ENCODE measurements at regions of chr1 and their contacts with region 1.

Region 1: DNA sequence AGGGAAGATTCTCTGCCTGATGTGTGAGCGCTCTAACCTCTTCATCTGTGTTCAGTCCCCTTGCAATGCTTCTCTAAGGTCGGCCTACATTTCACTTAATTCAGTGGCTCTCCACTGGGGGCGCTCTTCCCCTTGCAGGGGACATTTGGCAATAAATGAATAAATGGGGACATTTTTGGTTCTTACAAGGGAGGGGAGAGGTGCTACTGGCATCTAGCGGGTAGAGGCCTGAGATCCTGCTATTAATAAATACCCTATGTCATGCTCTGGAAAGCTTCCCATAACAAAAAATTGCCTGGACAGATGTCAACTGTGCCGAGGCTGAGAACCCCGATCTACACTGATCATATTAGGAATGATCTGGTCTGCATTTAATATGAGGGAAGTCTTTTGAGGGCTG is 25.9 kb upstream of the DNAJC11 start:
- DNase-seq: no peak
- H3K4me3 ChIP-seq: no peak overlapping the region
- H3K27ac ChIP-seq: no peak overlapping the region
- H3K4me1 ChIP-seq: peaks cover 0 to 6% (median 0%) of the 10 kb centered on the region in 3 donors
- H3K27me3 ChIP-seq: no peaks in the 10 kb centered on the region
- CTCF ChIP-seq: peak; percentile 71 to 91 (median 78)
- POLR2A ChIP-seq: no peak

Region 2: GRCh38 chr1:6889875-6890480 is 162.4 kb after region 1 on chr1:
- intact Hi-C with region 1: loop called (anchors 10 kb)
- DNase-seq: no peak
- H3K4me3 ChIP-seq: no peak overlapping the region
- H3K27ac ChIP-seq: no peak overlapping the region
- H3K4me1 ChIP-seq: peaks cover 0 to 6% (median 0%) of the 10 kb centered on the region in 3 donors
- H3K27me3 ChIP-seq: no peaks in the 10 kb centered on the region
- CTCF ChIP-seq: peak; percentile 42 to 84 (median 74)
- POLR2A ChIP-seq: no peak

Region 3: DNA sequence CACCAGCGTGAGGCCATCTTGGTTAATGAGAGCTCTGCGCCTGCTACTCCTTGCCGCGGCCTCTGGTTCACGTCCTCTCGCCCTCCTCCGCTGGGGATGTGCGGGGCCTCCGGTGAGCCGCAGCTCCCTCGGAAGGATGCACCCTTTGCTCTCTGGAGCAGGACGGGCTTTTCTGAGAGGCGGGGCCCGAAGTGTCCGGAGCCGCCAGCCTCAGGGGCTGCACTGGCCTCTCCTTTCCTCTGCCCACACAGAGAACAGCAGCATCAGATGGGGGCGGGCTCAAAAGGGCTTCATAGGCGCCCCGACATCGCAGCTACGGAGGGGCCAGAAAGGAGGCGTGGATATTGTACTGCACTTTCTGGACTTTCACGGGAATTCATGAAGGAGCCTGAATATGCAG is 342.4 kb after region 1 on chr1:
- intact Hi-C with region 1: loop called (anchors 10 kb)
- DNase-seq: no peak
- H3K4me3 ChIP-seq: peak overlapping the region in 3 of 4 donors; percentile 20 to 57 (median 35)
- H3K27ac ChIP-seq: no peak overlapping the region
- H3K4me1 ChIP-seq: peaks cover 0 to 10% (median 4%) of the 10 kb centered on the region in 3 donors
- H3K27me3 ChIP-seq: peaks cover 0 to 40% (median 0%) of the 10 kb centered on the region in 4 donors
- CTCF ChIP-seq: no peak
- POLR2A ChIP-seq: no peak

Measured in esophagus squamous epithelium (tissue), 5 donors.